ENCODE measurements at regions of chr19 and their contacts with region 1.

Region 1: GRCh38 chr19:49983645-49984229 is 22.8 kb upstream of the SIGLEC11 start:
- DNase-seq: peak; percentile 32
- H3K4me3 ChIP-seq: no peak overlapping the region
- H3K27ac ChIP-seq: no peak overlapping the region
- H3K4me1 ChIP-seq: no peaks in the 10 kb centered on the region
- H3K27me3 ChIP-seq: no peaks in the 10 kb centered on the region
- CTCF ChIP-seq: peak; percentile 81

Region 2: DNA sequence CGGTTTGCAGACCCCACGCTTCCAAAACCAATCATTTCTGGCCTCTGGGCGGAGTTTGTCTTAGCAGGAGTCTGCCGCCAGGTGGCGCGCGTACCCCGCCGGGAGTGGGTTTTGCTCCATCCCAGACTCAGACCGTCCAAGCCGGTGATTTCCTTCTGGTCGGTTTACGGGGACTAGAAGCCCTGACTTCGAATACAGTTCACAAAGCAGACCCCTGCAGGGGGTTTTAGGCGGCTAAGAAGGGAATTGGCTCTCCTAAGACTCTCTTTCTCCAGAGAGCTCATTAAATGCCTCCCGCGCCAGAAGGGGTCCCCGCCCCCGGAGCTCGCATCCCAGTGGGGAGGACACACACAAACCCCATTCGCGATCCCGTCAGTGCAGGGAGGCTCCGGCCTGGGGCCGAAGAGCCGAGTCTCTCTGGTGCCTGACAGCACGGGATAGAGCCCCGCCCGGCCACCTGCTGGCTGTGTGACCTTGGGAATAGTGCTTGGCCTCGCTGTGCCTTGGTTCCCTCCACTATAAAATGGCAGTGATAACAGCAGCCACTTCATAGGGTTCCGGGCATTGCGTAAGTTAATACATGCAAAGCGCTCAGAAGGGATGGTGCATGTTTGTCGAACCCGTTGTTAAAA is 45.9 kb before region 1 on chr19:
- intact Hi-C with region 1: loop called (anchors 5 kb)
- DNase-seq: peak; percentile 72
- H3K4me3 ChIP-seq: peak overlapping the region; percentile 34
- H3K27ac ChIP-seq: no peak overlapping the region
- H3K4me1 ChIP-seq: peaks cover 4% of the 10 kb centered on the region
- H3K27me3 ChIP-seq: peaks cover 12% of the 10 kb centered on the region
- CTCF ChIP-seq: peak; percentile 96